SK-MEL-5 (cell line): ENCODE measurements at regions of chr7 and their contacts with region 1.

Region 1: DNA sequence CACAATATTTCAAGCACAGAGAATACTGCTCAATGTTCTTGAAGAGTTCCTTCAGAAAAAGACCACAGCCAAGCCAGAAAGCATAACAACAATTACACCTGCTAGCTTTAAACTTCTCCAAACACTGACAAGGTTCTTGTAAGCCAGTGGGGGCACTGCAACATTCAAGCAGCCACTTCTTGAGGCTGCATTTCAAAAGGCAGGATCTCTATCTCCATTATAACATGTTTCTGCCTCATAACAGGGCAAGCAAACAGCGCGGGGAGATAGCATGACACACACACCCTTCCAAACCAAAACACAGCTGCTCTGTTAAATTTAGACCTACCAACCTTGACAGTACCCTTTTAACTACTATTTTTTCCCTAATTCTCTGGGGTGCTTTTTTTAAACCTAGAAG is 30.8 kb downstream of the CHCHD3 start:
- DNase-seq: peak; percentile 68

Region 2: GRCh38 chr7:132966754-132967469 is 84.2 kb before region 1 on chr7:
- in situ Hi-C with region 1: loop called (anchors 25 kb)
- DNase-seq: no peak